Posterior vena cava (tissue), 2 donors: ENCODE measurements at regions of chr15 and their contacts with region 1.

Region 1: DNA sequence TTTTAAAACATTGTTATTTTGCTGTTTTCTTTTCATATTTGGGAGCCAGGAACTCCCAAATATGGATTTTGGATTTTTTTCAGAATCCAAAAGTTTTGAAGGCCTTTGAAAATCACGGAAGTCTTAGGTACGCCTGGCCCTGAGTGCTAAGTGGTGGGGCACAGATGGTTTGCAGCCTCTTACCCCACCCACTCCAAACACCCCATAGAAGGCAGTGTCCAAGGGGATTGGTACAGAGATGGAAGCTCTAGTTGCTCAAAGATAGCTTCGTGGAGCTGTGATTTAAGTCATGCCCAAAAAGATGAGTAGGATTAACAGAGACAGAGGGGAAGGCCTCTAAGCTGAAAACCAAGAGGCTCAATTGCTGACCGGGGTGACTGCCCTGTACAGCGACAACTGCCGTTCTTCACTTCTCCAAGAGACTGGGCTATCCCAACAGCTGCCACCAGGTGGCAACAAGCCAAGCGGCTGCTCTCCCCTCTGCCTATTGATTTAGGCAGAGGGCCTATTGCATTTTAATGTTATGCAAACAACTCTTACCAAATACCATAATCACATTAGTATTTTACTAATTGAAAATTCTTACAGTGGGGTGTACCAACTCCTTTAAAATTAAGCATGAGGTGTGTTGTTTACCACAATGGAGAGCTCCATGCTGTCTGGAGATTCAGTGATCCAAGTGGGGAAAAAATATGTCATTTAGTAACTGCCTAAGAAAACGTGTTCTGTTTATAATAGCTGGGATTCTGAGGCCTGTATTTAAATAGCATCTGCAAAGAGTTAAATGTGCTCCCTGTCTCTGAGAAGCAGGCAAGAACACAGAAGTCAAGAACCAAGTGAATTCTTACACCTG is 64.0 kb upstream of the C15orf61 start:
- DNase-seq: peak; percentile 93

Region 2: GRCh38 chr15:66951531-66952320 is 505.2 kb before region 1 on chr15:
- intact Hi-C with region 1: loop called in 1 of 2 experiments (anchors 5 kb)
- DNase-seq: no peak

Region 3: DNA sequence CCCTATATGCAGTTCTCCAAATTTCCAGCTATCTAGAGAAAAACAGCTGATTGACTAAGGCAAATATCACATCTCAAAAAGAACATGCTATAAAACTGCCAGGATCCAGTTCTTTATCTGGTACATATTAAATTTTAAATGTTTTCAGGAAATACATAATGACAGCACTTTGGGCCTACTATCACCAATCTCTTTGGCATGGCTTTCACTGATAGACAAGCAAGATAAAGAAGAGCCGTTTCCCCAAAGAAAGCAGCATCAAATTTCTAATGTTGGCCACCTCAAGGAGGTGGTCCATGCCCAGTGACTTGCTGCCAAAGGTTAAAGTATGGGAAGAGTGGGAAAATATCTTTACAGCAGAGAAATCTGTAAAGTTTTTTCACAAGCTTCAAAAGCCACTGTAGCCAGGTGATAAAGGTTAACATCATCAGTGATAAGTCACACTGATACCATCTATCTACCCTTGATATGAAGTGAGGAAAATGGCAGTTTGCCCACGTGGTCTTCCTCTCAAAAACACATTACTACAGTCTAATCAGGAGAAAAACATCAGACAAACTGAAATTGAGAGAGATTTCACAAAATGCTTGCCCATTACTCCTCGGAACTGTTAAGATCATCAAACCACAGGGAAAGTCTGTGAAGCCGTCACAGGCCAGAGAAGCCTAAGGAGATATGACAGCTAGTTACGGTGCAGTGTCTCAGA is 17.7 kb after region 1 on chr15:
- intact Hi-C with region 1: loop called in 1 of 2 experiments (anchors 1 kb)
- DNase-seq: no peak

Region 4: GRCh38 chr15:67839929-67840748 is 383.2 kb after region 1 on chr15 and contains the start of gene RNU6-1:
- intact Hi-C with region 1: loop called in 1 of 2 experiments (anchors 5 kb)
- DNase-seq: peak; percentile 99
- total RNA-seq, gene RNU6-1: not detected